Esophagus squamous epithelium (tissue), 5 donors: ENCODE measurements at regions of chr4 and their contacts with region 1.

Region 1: DNA sequence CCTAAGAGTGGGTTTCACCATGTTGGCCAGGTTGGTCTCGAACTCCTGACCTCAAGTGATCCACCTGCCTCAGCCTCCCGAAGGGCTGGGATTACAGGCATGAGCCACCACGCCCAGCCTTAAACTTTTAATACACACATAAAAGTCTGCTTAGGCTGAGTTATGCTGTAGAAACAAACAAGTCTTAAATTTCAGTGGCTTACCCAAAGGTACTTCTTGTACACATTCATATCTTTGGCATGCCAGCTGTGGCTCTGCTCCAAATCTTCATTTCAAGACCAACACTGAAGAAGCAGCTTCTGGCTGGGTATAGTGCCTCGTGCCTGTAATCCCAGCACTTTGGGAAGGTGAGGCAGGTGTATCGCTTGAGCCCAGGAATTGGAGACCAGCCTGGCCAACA is 80.3 kb downstream of the PPEF2 start:
- DNase-seq: no peak
- H3K4me3 ChIP-seq: no peak overlapping the region
- H3K27ac ChIP-seq: no peak overlapping the region
- H3K4me1 ChIP-seq: no peaks in the 10 kb centered on the region
- H3K27me3 ChIP-seq: no peaks in the 10 kb centered on the region
- CTCF ChIP-seq: no peak
- POLR2A ChIP-seq: no peak

Region 2: GRCh38 chr4:75752637-75753036 is 69.3 kb before region 1 on chr4:
- intact Hi-C with region 1: loop called (anchors 10 kb)
- DNase-seq: no peak
- H3K4me3 ChIP-seq: no peak overlapping the region
- H3K27ac ChIP-seq: no peak overlapping the region
- H3K4me1 ChIP-seq: no peaks in the 10 kb centered on the region
- H3K27me3 ChIP-seq: no peaks in the 10 kb centered on the region
- CTCF ChIP-seq: no peak
- POLR2A ChIP-seq: no peak

Region 3: DNA sequence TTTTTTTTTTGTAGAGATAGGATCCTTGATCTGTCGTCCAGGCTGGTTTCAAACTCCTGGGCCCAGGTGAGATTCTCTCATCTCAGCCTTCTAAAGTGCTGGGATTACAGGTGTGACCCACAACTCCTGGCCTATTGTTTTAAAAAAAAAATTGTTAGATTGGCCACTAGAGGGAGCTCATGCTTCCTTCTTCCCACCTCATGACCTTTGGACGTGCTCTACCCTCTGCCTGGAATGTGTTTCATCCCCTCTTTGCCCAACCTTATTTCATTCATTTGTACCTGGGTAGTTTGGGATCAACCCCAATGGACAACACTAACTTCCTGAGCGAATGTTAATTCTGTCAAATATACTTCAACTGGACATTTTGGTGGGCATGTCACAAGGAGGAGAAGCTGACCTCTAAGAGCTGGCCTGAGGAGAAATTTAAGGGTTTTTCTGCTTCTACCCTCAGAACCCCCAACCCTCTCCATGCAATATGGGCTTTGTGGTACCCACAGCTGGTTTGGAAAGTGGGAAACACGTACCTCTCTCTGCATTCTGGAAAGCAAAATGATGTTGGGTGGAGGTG is 73.9 kb after region 1 on chr4:
- intact Hi-C with region 1: no loop called
- DNase-seq: no peak
- H3K4me3 ChIP-seq: no peak overlapping the region
- H3K27ac ChIP-seq: no peak overlapping the region
- H3K4me1 ChIP-seq: no peaks in the 10 kb centered on the region
- H3K27me3 ChIP-seq: no peaks in the 10 kb centered on the region
- CTCF ChIP-seq: peak in 5 of 6 experiments; percentile 24 to 64 (median 41)
- POLR2A ChIP-seq: no peak

Region 4: DNA sequence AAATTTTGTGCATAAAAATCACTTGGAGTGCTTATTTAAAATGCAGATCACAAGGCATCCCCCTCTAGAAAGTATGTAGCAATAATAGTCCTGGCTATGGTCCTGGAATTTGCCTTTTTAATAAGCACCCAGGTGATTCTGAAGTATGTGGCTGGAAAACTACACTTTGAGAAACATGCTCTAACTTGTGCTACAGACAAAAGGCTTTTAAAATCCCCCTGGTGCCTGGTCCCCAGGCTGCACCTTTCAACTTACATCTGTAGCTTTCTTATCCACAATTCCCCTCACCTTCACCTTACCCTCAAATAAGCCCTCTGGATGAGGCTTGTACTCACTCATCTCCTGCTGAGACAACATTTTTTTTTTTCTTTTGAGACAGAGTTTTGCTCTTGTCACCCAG is 273.6 kb after region 1 on chr4:
- intact Hi-C with region 1: no loop called
- DNase-seq: no peak
- H3K4me3 ChIP-seq: no peak overlapping the region
- H3K27ac ChIP-seq: no peak overlapping the region
- H3K4me1 ChIP-seq: peaks cover 0 to 9% (median 0%) of the 10 kb centered on the region in 3 donors
- H3K27me3 ChIP-seq: no peaks in the 10 kb centered on the region
- CTCF ChIP-seq: no peak
- POLR2A ChIP-seq: no peak